Left lung (tissue), 14 donors: ENCODE measurements at regions of chr1 and their contacts with region 1.

Region 1: GRCh38 chr1:166980818-166981217 is 5.5 kb upstream of the ILDR2 start:
- DNase-seq: no peak
- ATAC-seq: no peak
- H3K4me3 ChIP-seq: no peak overlapping the region
- H3K27ac ChIP-seq: no peak overlapping the region
- H3K4me1 ChIP-seq: no peaks in the 10 kb centered on the region
- H3K27me3 ChIP-seq: peaks cover 0 to 21% of the 10 kb centered on the region in 2 donors
- CTCF ChIP-seq: no peak

Region 2: GRCh38 chr1:166920561-166921475 is 60.0 kb before region 1 on chr1:
- intact Hi-C with region 1: loop called in 1 of 2 experiments (anchors 10 kb)
- DNase-seq: peak in 2 of 4 donors; percentile 14 to 78
- ATAC-seq: peak; percentile 68
- H3K4me3 ChIP-seq: peak overlapping the region; percentile 19 to 28
- H3K27ac ChIP-seq: no peak overlapping the region
- H3K4me1 ChIP-seq: peaks cover 0 to 10% of the 10 kb centered on the region in 2 donors
- H3K27me3 ChIP-seq: peaks cover 30 to 44% of the 10 kb centered on the region in 2 donors
- CTCF ChIP-seq: no peak

Region 3: GRCh38 chr1:167312871-167313270 is 332.1 kb after region 1 on chr1:
- intact Hi-C with region 1: no loop called
- DNase-seq: no peak
- ATAC-seq: no peak
- H3K4me3 ChIP-seq: no peak overlapping the region
- H3K27ac ChIP-seq: no peak overlapping the region
- H3K4me1 ChIP-seq: no peaks in the 10 kb centered on the region
- H3K27me3 ChIP-seq: no peaks in the 10 kb centered on the region
- CTCF ChIP-seq: no peak